AG04450 (cell line): ENCODE measurements at regions of chr16 and their contacts with region 1.

Region 1: DNA sequence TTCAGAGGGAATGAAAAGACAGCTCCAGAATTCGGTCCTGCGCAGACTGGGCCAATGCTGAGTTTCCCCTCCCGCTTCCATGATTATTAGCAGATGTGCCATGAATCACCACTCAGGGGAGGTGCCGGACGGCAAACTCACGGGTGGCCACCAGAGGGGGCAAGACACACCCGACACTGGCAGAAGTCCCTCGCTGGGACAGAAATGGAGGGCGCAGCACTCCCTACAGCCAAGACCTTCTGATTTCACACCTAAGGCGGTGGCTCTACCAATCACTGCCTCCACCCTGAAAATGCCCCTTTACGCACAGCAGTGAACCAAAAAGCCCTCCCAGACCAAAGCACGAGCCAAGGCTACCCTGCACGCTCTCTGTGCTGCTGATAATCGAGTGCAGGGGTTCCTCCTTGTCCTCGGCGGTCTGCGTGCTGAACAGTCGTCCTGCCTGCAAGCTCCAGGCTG is 26.8 kb downstream of the TRAP1 start:
- DNase-seq: peak; percentile 86
- H3K4me3 ChIP-seq: peak overlapping the region; percentile 44
- H3K27ac ChIP-seq: peak overlapping the region; percentile 61
- H3K27me3 ChIP-seq: no peaks in the 10 kb centered on the region
- CTCF ChIP-seq: peak; percentile 92

Region 2: DNA sequence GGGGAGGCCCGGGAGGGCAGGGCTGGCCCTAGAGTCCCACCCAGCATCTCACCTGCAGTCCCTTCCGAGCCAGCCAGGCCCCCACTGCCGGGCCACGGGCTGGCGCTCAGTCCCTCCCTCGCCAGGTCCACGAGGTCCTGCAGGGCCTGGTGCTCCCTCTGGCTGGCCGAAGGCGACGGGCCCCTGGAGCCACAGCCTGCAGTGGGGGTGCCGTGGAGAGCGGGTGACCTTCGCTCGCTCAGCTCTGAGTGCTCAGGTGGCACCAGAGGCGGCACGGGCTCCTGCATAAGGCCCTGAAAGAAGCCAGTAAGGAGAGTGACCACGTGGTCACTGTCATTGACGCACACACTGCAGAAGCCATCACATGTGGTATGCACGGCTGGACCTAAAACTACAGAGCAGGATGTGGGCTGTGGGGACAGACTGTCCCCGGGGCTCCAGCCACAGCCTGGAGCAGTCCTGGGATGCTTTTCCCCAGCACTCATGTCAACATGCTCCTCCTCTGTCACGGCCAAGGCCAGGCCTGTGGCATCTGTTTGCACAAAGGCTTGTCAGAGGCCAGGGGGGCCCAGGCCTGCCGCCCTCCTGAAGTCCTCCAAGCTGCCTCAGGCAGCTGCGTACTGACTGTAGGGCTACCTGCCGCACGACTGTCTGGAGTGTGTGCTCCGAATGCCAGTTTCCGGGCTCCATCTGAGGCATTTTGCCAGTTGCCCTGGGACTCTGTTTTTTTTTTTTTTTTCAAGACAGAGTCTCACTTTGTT is 94.2 kb before region 1 on chr16:
- CTCF ChIA-PET with region 1: no interaction called
- POLR2A ChIA-PET with region 1: no interaction called
- DNase-seq: no peak
- H3K4me3 ChIP-seq: no peak overlapping the region
- H3K27ac ChIP-seq: no peak overlapping the region
- H3K27me3 ChIP-seq: no peaks in the 10 kb centered on the region
- CTCF ChIP-seq: no peak

Region 3: GRCh38 chr16:3712861-3713372 is 22.4 kb after region 1 on chr16:
- CTCF ChIA-PET with region 1: interaction called, 11 read pairs
- POLR2A ChIA-PET with region 1: interaction called, 6 read pairs
- DNase-seq: no peak
- H3K4me3 ChIP-seq: no peak overlapping the region
- H3K27ac ChIP-seq: no peak overlapping the region
- H3K27me3 ChIP-seq: no peaks in the 10 kb centered on the region
- CTCF ChIP-seq: no peak

Region 4: DNA sequence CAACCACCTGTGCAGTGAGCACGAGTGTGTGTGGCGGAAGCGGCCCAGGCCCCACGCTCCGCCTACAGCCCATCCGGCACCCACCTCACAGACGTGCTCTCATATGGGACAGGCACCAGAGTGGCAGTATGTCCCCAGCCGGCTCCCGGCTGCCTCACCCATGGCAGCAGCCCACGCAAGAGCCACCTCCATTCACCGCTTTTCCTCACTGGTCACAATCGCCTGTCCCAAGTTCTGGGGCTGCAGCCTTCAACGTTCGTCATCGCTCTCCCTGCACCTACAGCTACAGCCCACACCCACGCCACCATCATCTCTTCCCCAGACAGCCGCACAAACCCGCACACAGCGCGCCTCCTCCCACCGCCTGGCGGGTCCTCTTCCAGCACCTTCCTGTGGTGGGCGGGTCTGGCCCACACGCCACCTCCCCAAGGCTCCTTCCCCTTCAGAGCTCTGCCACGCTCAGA is 44.3 kb after region 1 on chr16:
- CTCF ChIA-PET with region 1: no interaction called
- POLR2A ChIA-PET with region 1: no interaction called
- DNase-seq: no peak
- H3K4me3 ChIP-seq: no peak overlapping the region
- H3K27ac ChIP-seq: no peak overlapping the region
- H3K27me3 ChIP-seq: no peaks in the 10 kb centered on the region
- CTCF ChIP-seq: no peak

Region 5: DNA sequence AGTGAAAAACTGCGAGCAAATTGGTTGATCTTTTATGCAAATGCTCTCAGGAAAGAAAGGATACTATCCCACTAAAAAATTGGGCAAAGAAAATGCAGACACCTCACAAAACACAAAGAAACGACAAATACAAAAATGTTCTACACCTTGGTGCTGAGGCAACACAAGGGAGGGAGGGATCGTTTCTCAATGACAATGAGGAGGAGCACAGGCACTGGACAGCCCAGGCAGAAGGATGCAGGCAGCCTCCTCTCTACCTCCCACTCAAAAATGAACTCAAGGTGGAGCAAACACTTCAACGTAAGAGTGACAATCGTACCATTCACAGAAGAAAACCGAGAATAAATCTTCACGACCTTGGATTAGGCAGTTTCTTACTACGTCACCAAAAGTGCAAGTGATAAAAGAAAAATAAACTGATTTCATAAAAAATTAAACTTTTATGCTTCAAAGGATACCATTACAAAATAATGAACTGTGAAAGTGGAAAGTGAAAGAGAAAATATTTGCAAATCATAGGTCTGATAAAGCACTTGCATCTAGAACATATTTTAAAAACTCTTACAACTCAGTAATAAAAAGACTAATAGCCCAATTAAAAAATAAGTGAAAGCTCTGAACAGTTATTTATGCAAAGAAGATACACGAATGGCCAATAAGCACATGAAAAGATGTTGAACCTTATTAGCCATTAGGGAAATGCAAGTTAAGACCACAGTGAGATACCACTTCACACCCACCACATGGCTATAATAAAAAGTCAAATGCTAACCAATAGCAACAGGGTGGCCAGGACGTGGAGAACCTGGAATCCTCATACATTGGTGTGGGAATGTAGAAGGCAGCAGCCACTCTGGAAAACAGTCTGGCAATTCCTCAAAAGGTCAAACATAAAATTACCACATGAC is 107.7 kb after region 1 on chr16:
- CTCF ChIA-PET with region 1: no interaction called
- POLR2A ChIA-PET with region 1: no interaction called
- DNase-seq: no peak
- H3K4me3 ChIP-seq: no peak overlapping the region
- H3K27ac ChIP-seq: no peak overlapping the region
- H3K27me3 ChIP-seq: no peaks in the 10 kb centered on the region
- CTCF ChIP-seq: no peak